ENCODE measurements at regions of chr2 and their contacts with region 1.

Region 1: GRCh38 chr2:149038442-149039212 is at the start of gene LYPD6B:
- DNase-seq: peak; percentile 87
- H3K4me3 ChIP-seq: peak within 1 kb of the TSS; percentile 58 to 63
- H3K27ac ChIP-seq: no peak within 1 kb of the TSS
- H3K4me1 ChIP-seq: peaks cover 0 to 7% of the 10 kb centered on the region in 2 experiments; a peak in 1 of 4 replicates
- H3K27me3 ChIP-seq: no peaks in the 10 kb centered on the region
- CTCF ChIP-seq: peak; percentile 13; the same call in 1 of the 2 replicates
- EP300 ChIP-seq: no peak
- RAD21 ChIP-seq: peak; percentile 16
- polyA plus RNA-seq, gene LYPD6B: 17.0 and 18.2 TPM in 2 replicates

Region 2: DNA sequence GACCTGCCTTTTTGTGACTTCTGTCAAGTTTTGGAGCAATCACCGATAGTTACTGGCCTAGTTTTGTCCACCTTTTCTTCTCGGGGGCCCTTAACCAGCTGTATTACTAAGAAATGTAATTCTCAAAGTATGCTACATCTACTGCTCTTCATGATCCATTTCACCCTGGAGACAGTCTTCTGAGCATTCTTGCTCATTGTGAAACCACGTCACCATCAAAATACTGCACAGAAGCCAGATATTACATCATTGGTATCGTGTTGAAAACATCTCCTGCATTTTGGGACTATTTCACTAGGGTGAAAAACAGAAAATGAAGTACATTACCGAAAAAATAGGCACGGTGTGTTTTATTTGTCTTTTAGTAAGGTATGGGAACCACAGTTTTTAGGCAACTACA is 11.6 kb after region 1 on chr2:
- CTCF ChIA-PET with region 1: interaction called, 10 read pairs
- POLR2A ChIA-PET with region 1: no interaction called
- DNase-seq: no peak
- H3K4me3 ChIP-seq: no peak overlapping the region
- H3K27ac ChIP-seq: no peak overlapping the region
- H3K4me1 ChIP-seq: no peaks in the 10 kb centered on the region
- H3K27me3 ChIP-seq: no peaks in the 10 kb centered on the region
- CTCF ChIP-seq: no peak
- EP300 ChIP-seq: no peak
- RAD21 ChIP-seq: no peak